PC-9 (cell line): ENCODE measurements at regions of chr6 and their contacts with region 1.

Region 1: DNA sequence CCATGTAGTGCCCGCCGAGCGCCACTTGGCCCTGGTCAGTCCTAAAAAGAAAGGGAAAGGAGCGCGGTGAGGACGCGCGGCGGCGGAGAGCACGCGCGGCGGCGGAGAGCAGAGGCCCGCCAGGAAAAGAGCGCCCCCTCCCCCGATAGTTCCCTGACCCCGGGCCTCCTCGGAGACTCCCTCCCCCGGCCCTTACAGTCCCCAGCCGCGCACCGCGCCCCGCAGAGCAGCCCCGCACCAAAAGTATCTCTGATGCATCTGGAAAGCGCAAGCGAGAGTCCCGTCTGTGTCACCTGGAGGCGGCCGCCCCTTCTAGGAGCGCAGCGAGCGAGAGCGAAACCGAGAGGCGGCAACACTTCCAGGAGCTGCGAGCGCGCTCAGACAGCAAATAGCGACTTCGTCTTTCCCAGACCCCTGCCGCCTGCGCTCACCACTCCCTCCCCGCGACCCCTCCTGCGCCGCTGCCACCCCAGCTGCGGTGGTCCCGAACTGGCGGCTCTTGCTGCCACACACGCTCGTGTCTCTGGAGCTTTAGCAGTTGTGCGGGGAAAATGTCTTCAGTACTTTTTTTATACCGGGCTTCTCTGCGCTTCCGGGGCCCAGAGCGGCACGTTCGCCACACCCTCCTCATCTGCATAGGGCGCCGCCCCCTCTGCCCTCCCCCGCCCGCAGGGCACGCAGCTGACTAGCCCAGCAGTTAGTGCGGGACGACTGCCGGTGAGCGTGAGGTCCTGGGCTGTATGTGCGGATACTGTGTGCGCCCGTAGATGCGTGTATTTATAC is at the start of gene TENT5A:
- DNase-seq: peak; percentile 74 to 87
- H3K4me3 ChIP-seq: peak within 1 kb of the TSS; percentile 88
- H3K27ac ChIP-seq: peak within 1 kb of the TSS; percentile 72
- H3K4me1 ChIP-seq: 0 out of 2 replicates have a peak, but pooled peaks cover 4% of the 10 kb centered on the region
- H3K27me3 ChIP-seq: no peaks in the 10 kb centered on the region
- CTCF ChIP-seq: no peak
- total RNA-seq, gene TENT5A: 2.0 and 2.2 TPM in 2 replicates

Region 2: GRCh38 chr6:80133020-80133419 is 1619.3 kb before region 1 on chr6:
- CTCF ChIA-PET with region 1: no interaction called
- POLR2A ChIA-PET with region 1: no interaction called
- intact Hi-C with region 1: loop called (anchors 10 kb)
- DNase-seq: peak in 1 of 2 experiments; percentile 15
- H3K4me3 ChIP-seq: no peak overlapping the region
- H3K27ac ChIP-seq: no peak overlapping the region
- H3K4me1 ChIP-seq: peaks cover 9% of the 10 kb centered on the region
- H3K27me3 ChIP-seq: no peaks in the 10 kb centered on the region
- CTCF ChIP-seq: peak; percentile 31; the same call in 1 of the 2 replicates

Region 3: GRCh38 chr6:80605165-80605989 is 1147.0 kb before region 1 on chr6:
- CTCF ChIA-PET with region 1: no interaction called
- POLR2A ChIA-PET with region 1: no interaction called
- intact Hi-C with region 1: loop called (anchors 2 kb)
- DNase-seq: no peak
- H3K4me3 ChIP-seq: no peak overlapping the region
- H3K27ac ChIP-seq: no peak overlapping the region
- H3K4me1 ChIP-seq: 0 out of 2 replicates have a peak, but pooled peaks cover 4% of the 10 kb centered on the region
- H3K27me3 ChIP-seq: no peaks in the 10 kb centered on the region
- CTCF ChIP-seq: peak; percentile 66

Region 4: GRCh38 chr6:81241126-81242041 is 510.9 kb before region 1 on chr6:
- CTCF ChIA-PET with region 1: no interaction called
- POLR2A ChIA-PET with region 1: no interaction called
- intact Hi-C with region 1: loop called (anchors 5 kb)
- DNase-seq: no peak
- H3K4me3 ChIP-seq: no peak overlapping the region
- H3K27ac ChIP-seq: no peak overlapping the region
- H3K4me1 ChIP-seq: no peaks in the 10 kb centered on the region
- H3K27me3 ChIP-seq: no peaks in the 10 kb centered on the region
- CTCF ChIP-seq: peak; percentile 50

Region 5: GRCh38 chr6:81696482-81696881 is 55.8 kb before region 1 on chr6:
- CTCF ChIA-PET with region 1: no interaction called
- POLR2A ChIA-PET with region 1: no interaction called
- intact Hi-C with region 1: loop called (anchors 2 kb)
- DNase-seq: peak; percentile 25 to 81
- H3K4me3 ChIP-seq: no peak overlapping the region
- H3K27ac ChIP-seq: peak overlapping the region; percentile 52
- H3K4me1 ChIP-seq: peaks cover 26% of the 10 kb centered on the region
- H3K27me3 ChIP-seq: no peaks in the 10 kb centered on the region
- CTCF ChIP-seq: no peak

Region 6: DNA sequence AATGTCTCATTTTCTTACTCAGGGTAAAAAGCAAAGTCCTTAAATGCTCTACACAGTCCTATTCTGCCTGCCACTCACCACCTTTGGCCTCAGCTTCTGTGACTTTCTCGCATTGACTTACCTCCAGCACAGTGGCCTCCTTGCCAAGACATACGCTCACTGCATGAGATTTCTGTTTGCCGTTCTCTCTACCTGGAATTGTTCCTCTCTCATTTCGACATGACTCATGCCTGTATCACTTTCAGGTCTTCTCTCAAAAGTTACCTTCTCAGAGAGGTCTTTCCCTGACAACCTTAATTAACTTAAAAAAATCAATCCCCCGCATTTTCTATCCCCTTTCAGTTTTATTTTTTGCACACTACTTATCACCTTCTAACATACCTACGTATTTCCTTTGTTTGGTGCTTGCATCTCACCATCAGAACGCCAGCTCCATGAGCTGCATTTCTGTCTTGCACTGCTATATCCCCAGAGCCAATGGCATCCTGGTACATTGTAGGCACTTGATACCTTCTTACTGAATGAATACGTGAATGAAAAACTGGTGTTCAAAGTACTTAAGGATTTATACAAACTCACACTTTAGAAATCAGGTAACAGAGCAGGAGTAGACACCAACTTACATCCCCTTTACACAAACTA is 24.3 kb before region 1 on chr6:
- CTCF ChIA-PET with region 1: no interaction called
- POLR2A ChIA-PET with region 1: no interaction called
- intact Hi-C with region 1: no loop called
- DNase-seq: no peak
- H3K4me3 ChIP-seq: no peak overlapping the region
- H3K27ac ChIP-seq: no peak overlapping the region
- H3K4me1 ChIP-seq: no peaks in the 10 kb centered on the region
- H3K27me3 ChIP-seq: no peaks in the 10 kb centered on the region
- CTCF ChIP-seq: no peak

Region 7: GRCh38 chr6:81938014-81938856 is 185.9 kb after region 1 on chr6:
- CTCF ChIA-PET with region 1: no interaction called
- POLR2A ChIA-PET with region 1: no interaction called
- intact Hi-C with region 1: loop called (anchors 5 kb)
- DNase-seq: peak; percentile 15 to 91
- H3K4me3 ChIP-seq: no peak overlapping the region
- H3K27ac ChIP-seq: peak overlapping the region; percentile 96
- H3K4me1 ChIP-seq: peaks cover 46% of the 10 kb centered on the region
- H3K27me3 ChIP-seq: no peaks in the 10 kb centered on the region
- CTCF ChIP-seq: no peak

Region 8: DNA sequence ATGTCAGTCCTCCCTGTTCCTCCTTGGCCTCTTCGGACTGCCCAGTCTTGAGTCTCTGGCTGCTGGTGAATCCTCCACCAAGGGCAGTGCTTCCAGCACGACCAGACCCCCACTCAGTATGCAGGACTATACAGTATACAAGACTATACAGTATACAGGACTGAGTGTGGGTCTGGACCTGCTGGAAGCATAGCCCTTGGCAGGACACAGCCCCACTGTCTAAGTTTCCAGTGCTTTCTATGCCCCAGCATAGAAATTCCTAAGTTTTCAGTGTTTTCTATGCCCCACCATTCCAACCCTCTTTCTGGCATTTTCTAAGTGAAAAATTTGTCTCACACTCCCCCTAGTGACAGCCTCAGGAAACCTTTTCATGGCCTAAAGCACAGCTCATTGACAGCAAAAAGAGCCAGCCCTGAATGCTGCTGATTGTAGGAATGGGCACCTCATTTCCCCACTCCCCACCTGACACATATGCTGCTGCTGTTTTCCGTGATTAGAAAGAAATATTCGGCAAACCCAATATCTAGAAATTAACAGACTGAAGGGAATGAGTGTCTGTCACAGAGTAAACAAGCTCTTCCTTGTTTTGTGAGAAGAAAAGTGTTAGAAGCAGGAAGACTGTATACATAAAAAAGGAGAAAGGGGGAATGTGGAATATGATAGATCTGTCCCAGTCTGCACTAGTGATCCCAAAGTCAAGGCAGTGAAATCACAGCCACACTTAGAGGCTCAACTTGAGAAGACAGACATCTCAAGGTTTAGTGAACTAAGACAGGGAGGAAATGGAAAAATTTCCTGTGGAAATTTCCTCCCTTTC is 288.3 kb after region 1 on chr6:
- CTCF ChIA-PET with region 1: interaction called, 3 read pairs
- POLR2A ChIA-PET with region 1: no interaction called
- intact Hi-C with region 1: loop called (anchors 5 kb)
- DNase-seq: peak in 1 of 2 experiments; percentile 26
- H3K4me3 ChIP-seq: no peak overlapping the region
- H3K27ac ChIP-seq: no peak overlapping the region
- H3K4me1 ChIP-seq: no peaks in the 10 kb centered on the region
- H3K27me3 ChIP-seq: no peaks in the 10 kb centered on the region
- CTCF ChIP-seq: peak; percentile 75